GM12878 (cell line): ENCODE measurements at regions of chr2 and their contacts with region 1.

Region 1: DNA sequence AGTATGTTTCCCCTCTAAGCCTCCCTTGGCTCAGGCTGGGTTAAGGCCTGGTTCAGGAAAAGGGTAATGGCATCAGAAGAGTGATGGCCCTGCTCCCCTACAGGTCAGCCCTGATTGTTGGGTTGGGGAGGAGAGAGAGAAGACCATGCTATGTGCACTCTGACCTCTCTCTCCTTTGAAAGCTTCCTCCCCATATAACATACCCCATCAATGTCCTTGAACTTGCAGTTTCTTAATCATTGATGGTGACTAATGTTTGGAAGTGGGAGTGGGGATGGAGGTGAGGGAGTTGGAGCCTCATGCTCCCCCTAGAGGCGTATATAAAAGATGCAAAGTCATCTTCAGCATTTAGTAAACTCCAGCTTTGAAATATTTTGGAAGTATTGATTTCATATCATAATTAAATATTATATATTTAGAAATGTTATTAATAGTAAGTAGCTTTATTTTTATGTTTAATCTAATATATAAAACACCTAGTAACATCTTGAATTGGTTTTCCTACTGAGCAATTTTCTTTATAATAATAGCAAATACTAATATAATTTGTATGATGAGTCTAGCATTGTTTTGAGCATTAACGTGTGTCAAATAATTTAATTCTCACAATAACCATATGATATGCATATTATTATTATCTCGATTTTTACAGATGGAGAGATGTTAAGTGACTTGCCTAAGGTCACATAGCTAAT is 8.8 kb downstream of the PLCL1 start:
- DNase-seq: no peak
- ATAC-seq: peak; percentile 64
- H3K4me3 ChIP-seq: no peak overlapping the region
- H3K27ac ChIP-seq: no peak overlapping the region
- H3K4me1 ChIP-seq: no peaks in the 10 kb centered on the region
- H3K27me3 ChIP-seq: peaks cover 0 to 3% of the 10 kb centered on the region in 2 experiments; a peak in 1 of 4 replicates
- CTCF ChIP-seq: peak; percentile 43 to 61 (median 56)
- EP300 ChIP-seq: no peak
- POLR2A ChIP-seq: no peak
- RAD21 ChIP-seq: no peak

Region 2: GRCh38 chr2:197799068-197799467 is 14.2 kb before region 1 on chr2:
- CTCF ChIA-PET with region 1: interaction called, 13 read pairs
- POLR2A ChIA-PET with region 1: interaction called, 3 read pairs
- RAD21 ChIA-PET with region 1: interaction called, 6 read pairs
- SMC1A ChIA-PET with region 1: interaction called, 8 read pairs
- in situ Hi-C with region 1: no loop called
- intact Hi-C with region 1: no loop called
- DNase-seq: no peak
- ATAC-seq: peak; percentile 49
- H3K4me3 ChIP-seq: no peak overlapping the region
- H3K27ac ChIP-seq: no peak overlapping the region
- H3K4me1 ChIP-seq: no peaks in the 10 kb centered on the region
- H3K27me3 ChIP-seq: peaks cover 0 to 2% of the 10 kb centered on the region in 2 experiments; a peak in 2 of 4 replicates
- CTCF ChIP-seq: no peak
- EP300 ChIP-seq: no peak
- POLR2A ChIP-seq: no peak
- RAD21 ChIP-seq: no peak

Region 3: GRCh38 chr2:197828464-197829135 is 15.4 kb after region 1 on chr2:
- CTCF ChIA-PET with region 1: interaction called, 23 read pairs
- POLR2A ChIA-PET with region 1: no interaction called
- RAD21 ChIA-PET with region 1: interaction called, 4 read pairs
- SMC1A ChIA-PET with region 1: interaction called, 9 read pairs
- in situ Hi-C with region 1: no loop called
- intact Hi-C with region 1: no loop called
- DNase-seq: no peak
- ATAC-seq: no peak
- H3K4me3 ChIP-seq: no peak overlapping the region
- H3K27ac ChIP-seq: no peak overlapping the region
- H3K4me1 ChIP-seq: no peaks in the 10 kb centered on the region
- H3K27me3 ChIP-seq: peaks cover 0 to 4% of the 10 kb centered on the region in 2 experiments; a peak in 1 of 4 replicates
- CTCF ChIP-seq: no peak
- EP300 ChIP-seq: no peak
- POLR2A ChIP-seq: no peak
- RAD21 ChIP-seq: no peak

Region 4: DNA sequence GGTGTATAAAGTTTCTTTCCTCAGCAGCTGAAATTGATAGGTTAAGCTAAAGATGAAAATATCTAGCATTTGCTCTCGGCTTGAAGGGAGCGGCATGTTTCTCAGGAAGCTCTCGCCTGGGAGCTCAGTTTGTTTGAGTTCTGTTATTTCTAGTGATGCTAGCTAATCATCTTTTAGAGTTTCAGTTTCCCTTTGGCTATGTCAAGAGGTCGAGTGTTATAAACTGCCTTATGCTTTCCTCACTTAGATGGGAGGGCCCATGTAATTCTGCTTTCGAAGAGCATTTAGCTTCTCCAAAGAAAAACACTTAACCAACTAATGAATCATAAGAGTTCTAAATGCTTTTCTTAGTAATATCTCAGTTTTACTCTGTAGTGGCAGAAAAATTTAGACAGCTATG is 24.8 kb after region 1 on chr2:
- CTCF ChIA-PET with region 1: interaction called, 16 read pairs
- POLR2A ChIA-PET with region 1: interaction called, 5 read pairs
- RAD21 ChIA-PET with region 1: interaction called, 9 read pairs
- SMC1A ChIA-PET with region 1: interaction called, 22 read pairs
- in situ Hi-C with region 1: no loop called
- intact Hi-C with region 1: no loop called
- DNase-seq: peak; percentile 30
- ATAC-seq: peak; percentile 97
- H3K4me3 ChIP-seq: no peak overlapping the region
- H3K27ac ChIP-seq: no peak overlapping the region
- H3K4me1 ChIP-seq: no peaks in the 10 kb centered on the region
- H3K27me3 ChIP-seq: no peaks in the 10 kb centered on the region
- CTCF ChIP-seq: no peak
- EP300 ChIP-seq: no peak
- POLR2A ChIP-seq: no peak
- RAD21 ChIP-seq: no peak